ENCODE measurements at regions of chr7 and their contacts with region 1.

Region 1: GRCh38 chr7:139359366-139360209 is at the start of gene LUC7L2:
- DNase-seq: peak; percentile 100
- H3K4me3 ChIP-seq: peak within 1 kb of the TSS; percentile 83 to 100
- H3K27ac ChIP-seq: peak within 1 kb of the TSS; percentile 98 to 100
- H3K4me1 ChIP-seq: peaks cover 0 to 45% (median 22%) of the 10 kb centered on the region in 4 donors
- H3K27me3 ChIP-seq: no peaks in the 10 kb centered on the region
- CTCF ChIP-seq: no peak

Region 2: DNA sequence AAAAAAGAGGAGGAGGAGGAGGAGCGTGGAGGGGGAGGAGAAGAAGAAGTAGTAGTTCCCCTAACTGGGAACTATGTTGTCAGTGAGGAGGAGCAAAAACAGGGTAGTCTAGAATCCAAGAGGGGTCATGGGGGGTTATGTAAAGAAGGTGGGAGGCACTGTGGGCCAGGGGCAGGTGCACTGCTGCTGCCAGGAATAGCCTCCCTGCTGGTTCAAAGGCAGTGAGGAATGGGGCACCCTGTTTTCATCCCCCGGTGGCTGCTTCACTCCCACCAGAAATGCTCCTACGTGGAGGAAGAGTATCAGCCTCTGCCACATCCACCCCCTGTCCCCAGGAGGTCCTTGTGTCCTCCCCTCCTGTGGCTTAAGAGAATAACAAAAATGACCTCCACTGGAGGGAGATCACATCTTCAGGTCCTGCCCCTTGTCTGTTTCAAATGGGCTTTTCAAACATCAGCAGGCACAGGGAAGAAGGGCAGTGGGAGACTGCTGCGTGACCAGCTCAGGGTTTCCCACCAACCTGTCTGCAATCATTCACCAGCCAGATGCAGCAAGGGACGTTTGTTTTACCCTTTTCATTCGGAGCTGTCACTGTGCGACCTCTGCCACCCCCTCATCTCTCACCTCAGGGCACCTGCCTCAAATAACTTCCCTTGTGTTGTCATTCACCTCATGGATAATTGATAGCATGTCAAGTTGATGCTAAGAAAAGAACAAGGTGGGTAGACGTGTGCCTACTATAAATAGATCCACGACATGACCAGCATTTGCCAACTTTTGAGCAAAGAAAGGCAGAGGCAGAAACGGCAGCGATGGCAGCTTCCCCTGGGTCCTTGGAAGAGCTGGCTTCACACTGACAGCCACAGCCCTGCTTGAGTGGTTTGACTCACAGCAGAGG is 1605.4 kb before region 1 on chr7:
- intact Hi-C with region 1: no loop called
- DNase-seq: no peak
- H3K4me3 ChIP-seq: no peak overlapping the region
- H3K27ac ChIP-seq: no peak overlapping the region
- H3K4me1 ChIP-seq: peaks cover 0 to 4% (median 0%) of the 10 kb centered on the region in 4 donors
- H3K27me3 ChIP-seq: no peaks in the 10 kb centered on the region
- CTCF ChIP-seq: no peak

Region 3: DNA sequence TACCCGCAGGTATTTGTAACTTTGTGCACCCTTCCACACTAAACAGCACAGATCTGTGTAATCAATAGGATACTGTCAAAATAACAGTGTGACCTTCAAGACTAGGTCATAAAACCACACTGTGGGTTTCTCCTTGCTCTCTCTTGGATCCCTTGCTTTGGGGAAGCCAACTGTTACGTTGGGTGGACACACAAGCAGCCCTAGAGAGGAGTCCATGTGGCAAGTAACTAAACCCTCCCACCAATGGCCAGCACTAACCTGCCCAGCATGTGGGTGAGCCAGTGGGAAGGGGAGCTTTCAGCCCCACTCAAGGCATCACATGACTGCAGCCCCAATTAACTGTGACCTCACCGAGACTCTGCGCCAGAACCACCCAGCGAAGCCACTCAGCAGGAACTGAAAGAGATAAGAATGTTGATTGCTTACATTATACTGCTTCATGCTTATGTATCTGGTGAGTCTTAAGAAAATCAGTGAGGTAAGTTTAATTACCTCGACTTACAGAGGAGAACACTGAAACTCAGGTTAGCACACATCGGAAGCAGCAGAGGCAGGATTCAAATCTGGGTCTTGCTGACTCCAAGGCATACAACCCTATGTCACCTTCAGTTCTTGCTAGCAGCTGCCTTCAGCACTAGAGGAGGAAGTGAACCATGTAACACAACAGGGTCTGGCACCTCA is 240.6 kb before region 1 on chr7:
- intact Hi-C with region 1: no loop called
- DNase-seq: no peak
- H3K4me3 ChIP-seq: no peak overlapping the region
- H3K27ac ChIP-seq: no peak overlapping the region
- H3K4me1 ChIP-seq: no peaks in the 10 kb centered on the region
- H3K27me3 ChIP-seq: peaks cover 0 to 14% of the 10 kb centered on the region in 2 donors
- CTCF ChIP-seq: no peak

Region 4: GRCh38 chr7:139340037-139340807 is 19.4 kb before region 1 on chr7:
- intact Hi-C with region 1: loop called (anchors 2 kb)
- DNase-seq: peak; percentile 100
- H3K4me3 ChIP-seq: peak overlapping the region; percentile 72 to 88
- H3K27ac ChIP-seq: peak overlapping the region; percentile 99 to 100
- H3K4me1 ChIP-seq: peaks cover 0 to 13% (median 12%) of the 10 kb centered on the region in 4 donors
- H3K27me3 ChIP-seq: no peaks in the 10 kb centered on the region
- CTCF ChIP-seq: peak; percentile 44 to 66

Region 5: GRCh38 chr7:139523199-139523941 is 163.8 kb after region 1 on chr7 and contains the start of gene CLEC2L:
- intact Hi-C with region 1: no loop called
- DNase-seq: no peak
- H3K4me3 ChIP-seq: peak within 1 kb of the TSS in 1 of 2 donors; percentile 26
- H3K27ac ChIP-seq: no peak within 1 kb of the TSS
- H3K4me1 ChIP-seq: peaks cover 0 to 11% (median 1%) of the 10 kb centered on the region in 4 donors
- H3K27me3 ChIP-seq: peaks cover 0 to 51% of the 10 kb centered on the region in 2 donors
- CTCF ChIP-seq: no peak

Region 6: GRCh38 chr7:140175221-140176121 is 815.9 kb after region 1 on chr7:
- intact Hi-C with region 1: loop called (anchors 5 kb)
- DNase-seq: peak; percentile 96 to 97
- H3K4me3 ChIP-seq: peak overlapping the region; percentile 92 to 99
- H3K27ac ChIP-seq: peak overlapping the region; percentile 100
- H3K4me1 ChIP-seq: peaks cover 0 to 19% (median 7%) of the 10 kb centered on the region in 4 donors
- H3K27me3 ChIP-seq: no peaks in the 10 kb centered on the region
- CTCF ChIP-seq: peak; percentile 78 to 87

Measured in tibial artery (tissue), 4 donors.